ENCODE measurements at regions of chr13 and their contacts with region 1.

Region 1: GRCh38 chr13:34543836-34544235 is 398.2 kb upstream of the NBEA start:
- DNase-seq: no peak
- ATAC-seq: no peak
- H3K4me3 ChIP-seq: no peak overlapping the region
- H3K27ac ChIP-seq: no peak overlapping the region
- H3K4me1 ChIP-seq: peaks cover 0 to 7% (median 0%) of the 10 kb centered on the region in 9 donors
- H3K27me3 ChIP-seq: no peaks in the 10 kb centered on the region
- CTCF ChIP-seq: no peak

Region 2: GRCh38 chr13:34435338-34435737 is 108.5 kb before region 1 on chr13:
- intact Hi-C with region 1: no loop called
- DNase-seq: no peak
- ATAC-seq: peak in 3 of 8 donors; percentile 42 to 72 (median 69)
- H3K4me3 ChIP-seq: no peak overlapping the region
- H3K27ac ChIP-seq: no peak overlapping the region
- H3K4me1 ChIP-seq: no peaks in the 10 kb centered on the region
- H3K27me3 ChIP-seq: no peaks in the 10 kb centered on the region
- CTCF ChIP-seq: no peak

Region 3: DNA sequence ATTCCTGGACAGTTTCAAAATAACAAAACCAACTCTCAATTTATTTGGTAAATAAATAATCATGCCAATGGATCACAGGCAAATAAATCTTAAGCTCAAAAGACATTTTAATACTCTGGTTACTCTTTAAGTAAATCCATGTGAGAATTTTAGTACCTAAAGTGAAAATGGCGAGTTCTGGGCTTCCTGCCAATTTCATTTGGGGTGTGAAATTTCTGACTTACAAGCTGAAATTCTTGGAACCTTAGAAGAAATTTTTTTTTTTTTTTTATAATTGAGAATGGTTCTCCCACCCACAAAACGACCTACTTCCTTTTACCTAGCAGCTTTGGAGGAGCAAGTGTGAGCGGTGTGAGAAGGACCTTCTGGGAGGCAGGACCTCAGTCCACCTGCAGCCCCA is 43.7 kb after region 1 on chr13:
- intact Hi-C with region 1: loop called in 1 of 10 experiments (anchors 2 kb)
- DNase-seq: no peak
- ATAC-seq: no peak
- H3K4me3 ChIP-seq: no peak overlapping the region
- H3K27ac ChIP-seq: no peak overlapping the region
- H3K4me1 ChIP-seq: peaks cover 0 to 18% (median 6%) of the 10 kb centered on the region in 9 donors
- H3K27me3 ChIP-seq: no peaks in the 10 kb centered on the region
- CTCF ChIP-seq: no peak